AG04449 (cell line): ENCODE measurements at regions of chr9 and their contacts with region 1.

Region 1: DNA sequence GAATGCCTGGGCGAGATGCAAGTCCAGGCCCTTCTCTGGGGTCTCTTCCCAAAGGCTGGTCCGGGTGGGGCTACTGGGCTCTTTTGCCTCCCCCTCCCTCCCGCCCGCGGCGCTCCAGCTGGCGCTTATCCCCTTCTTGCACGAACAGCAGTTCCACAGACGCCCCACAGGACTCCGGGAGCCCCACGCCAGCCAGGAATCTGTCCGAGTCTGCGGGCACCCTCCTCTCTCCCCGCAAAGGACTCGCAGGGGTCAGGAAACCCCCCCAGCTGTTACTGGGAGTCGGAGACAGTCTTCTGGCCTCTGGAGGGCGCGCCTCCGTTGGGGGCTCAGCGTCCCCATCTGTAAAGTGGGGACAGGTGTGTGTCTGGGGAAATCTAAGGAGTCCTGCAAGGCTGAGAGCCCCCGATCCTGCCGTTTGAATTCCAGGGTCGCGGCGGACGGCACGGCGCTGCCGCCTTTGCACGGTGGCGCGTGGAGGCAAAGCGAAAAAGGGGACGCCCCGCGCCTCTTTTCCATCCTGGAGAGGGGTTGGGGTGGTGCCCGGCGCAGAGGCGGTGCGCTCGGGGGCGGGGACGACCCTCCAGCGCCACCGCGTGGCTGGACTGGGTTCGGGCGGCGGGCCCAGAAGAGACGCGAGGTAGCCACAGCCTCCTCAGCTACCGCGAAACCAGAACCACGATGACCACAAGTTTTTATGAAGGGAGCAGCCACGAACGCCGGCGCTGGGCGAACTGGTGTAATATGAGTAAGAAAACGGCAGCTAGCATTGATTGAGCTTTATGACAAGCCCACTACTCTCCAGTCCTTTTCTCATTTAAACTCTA is 2.9 kb upstream of the CCIN start:
- DNase-seq: no peak
- H3K4me3 ChIP-seq: peak overlapping the region; percentile 63
- CTCF ChIP-seq: peak; percentile 95

Region 2: GRCh38 chr9:36080519-36080918 is 85.8 kb before region 1 on chr9:
- CTCF ChIA-PET with region 1: no interaction called
- POLR2A ChIA-PET with region 1: no interaction called
- DNase-seq: no peak
- H3K4me3 ChIP-seq: no peak overlapping the region
- CTCF ChIP-seq: no peak

Region 3: GRCh38 chr9:36102742-36103495 is 63.4 kb before region 1 on chr9:
- CTCF ChIA-PET with region 1: interaction called, 35 read pairs
- POLR2A ChIA-PET with region 1: interaction called, 6 read pairs
- DNase-seq: no peak
- H3K4me3 ChIP-seq: no peak overlapping the region
- CTCF ChIP-seq: peak; percentile 43

Region 4: GRCh38 chr9:36116593-36116992 is 49.7 kb before region 1 on chr9:
- CTCF ChIA-PET with region 1: interaction called, 13 read pairs
- POLR2A ChIA-PET with region 1: interaction called, 3 read pairs
- DNase-seq: no peak
- H3K4me3 ChIP-seq: no peak overlapping the region
- CTCF ChIP-seq: no peak

Region 5: DNA sequence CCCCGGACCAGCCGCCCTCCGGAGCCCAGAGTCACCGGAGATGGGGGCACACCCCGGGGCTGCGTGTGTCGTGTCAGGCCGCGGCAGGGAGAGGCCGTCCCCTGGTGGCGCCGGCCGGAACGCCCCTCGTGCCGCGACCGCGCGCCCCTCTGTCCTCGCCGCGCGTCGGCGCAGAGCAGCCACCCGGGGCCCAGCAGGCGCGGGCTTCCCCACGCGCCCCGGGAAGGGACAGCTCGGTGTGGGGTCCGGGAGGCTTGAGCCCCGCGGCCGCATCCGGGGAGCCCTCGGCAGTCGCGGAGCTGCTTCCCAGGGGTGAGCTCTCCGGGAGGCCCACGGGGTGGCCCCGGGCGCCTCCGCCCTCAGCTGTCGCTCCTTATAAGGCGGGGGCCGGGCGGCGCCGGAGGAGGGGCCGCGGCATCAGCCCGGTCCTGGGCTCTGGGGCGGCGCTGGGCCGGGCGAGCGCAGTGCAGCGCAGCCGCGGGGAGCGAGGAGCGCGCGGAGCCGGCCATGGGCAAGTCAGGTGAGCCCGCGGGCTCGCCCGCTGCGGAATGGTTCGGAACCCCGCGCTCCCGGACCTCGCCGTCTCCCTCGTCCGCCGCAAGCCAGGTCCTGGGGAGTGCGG is 29.9 kb before region 1 on chr9 and contains the start of gene GLIPR2:
- CTCF ChIA-PET with region 1: interaction called, 45 read pairs
- POLR2A ChIA-PET with region 1: interaction called, 9 read pairs
- DNase-seq: no peak
- H3K4me3 ChIP-seq: peak within 1 kb of the TSS; percentile 64
- CTCF ChIP-seq: peak; percentile 14

Region 6: GRCh38 chr9:36148311-36149051 is 17.8 kb before region 1 on chr9:
- CTCF ChIA-PET with region 1: interaction called, 103 read pairs
- POLR2A ChIA-PET with region 1: interaction called, 12 read pairs
- DNase-seq: peak; percentile 77
- H3K4me3 ChIP-seq: no peak overlapping the region; the same call in 1 of the 2 replicates
- CTCF ChIP-seq: no peak

Region 7: DNA sequence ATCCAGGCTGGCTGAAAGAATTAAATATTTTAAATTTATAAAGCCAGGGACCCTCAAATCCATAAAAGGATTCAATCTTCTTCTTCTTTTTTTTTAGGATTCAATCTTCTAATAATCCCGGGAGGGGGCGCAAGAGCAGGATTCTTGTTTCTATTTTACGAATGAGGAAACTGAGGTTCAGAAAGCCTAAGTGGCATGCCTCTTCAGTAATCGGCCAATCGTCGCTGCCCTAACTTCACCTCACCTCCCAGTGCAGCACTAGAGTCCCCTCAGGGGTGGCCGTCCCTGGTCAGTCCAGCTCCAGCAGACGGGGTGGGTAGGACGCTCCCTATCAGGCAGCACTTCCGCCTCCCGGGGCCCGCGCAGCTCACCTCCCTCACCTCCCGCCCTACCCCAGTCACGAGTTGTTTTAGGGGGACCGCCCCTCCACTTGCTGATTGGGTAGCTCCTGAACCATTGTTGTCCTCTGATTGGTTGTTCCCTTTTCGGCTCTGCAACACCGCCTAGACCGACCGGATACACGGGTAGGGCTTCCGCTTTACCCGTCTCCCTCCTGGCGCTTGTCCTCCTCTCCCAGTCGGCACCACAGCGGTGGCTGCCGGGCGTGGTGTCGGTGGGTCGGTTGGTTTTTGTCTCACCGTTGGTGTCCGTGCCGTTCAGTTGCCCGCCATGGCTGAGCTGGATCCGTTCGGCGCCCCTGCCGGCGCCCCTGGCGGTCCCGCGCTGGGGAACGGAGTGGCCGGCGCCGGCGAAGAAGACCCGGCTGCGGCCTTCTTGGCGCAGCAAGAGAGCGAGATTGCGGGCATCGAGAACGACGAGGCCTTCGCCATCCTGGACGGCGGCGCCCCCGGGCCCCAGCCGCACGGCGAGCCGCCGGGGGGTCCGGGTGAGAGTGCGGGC is 24.3 kb after region 1 on chr9 and contains the start of gene CLTA:
- CTCF ChIA-PET with region 1: interaction called, 24 read pairs
- POLR2A ChIA-PET with region 1: interaction called, 5 read pairs
- DNase-seq: peak; percentile 91
- H3K4me3 ChIP-seq: peak within 1 kb of the TSS; percentile 68
- CTCF ChIP-seq: peak; percentile 33

Region 8: GRCh38 chr9:36364577-36364976 is 198.3 kb after region 1 on chr9:
- CTCF ChIA-PET with region 1: no interaction called
- POLR2A ChIA-PET with region 1: no interaction called
- DNase-seq: no peak
- H3K4me3 ChIP-seq: no peak overlapping the region
- CTCF ChIP-seq: no peak